ENCODE measurements at regions of chr20 and their contacts with region 1.

Region 1: GRCh38 chr20:41717483-41717882 is 99.3 kb upstream of the CHD6 start:
- DNase-seq: no peak
- H3K4me3 ChIP-seq: no peak overlapping the region
- H3K27me3 ChIP-seq: no peaks in the 10 kb centered on the region
- CTCF ChIP-seq: no peak

Region 2: DNA sequence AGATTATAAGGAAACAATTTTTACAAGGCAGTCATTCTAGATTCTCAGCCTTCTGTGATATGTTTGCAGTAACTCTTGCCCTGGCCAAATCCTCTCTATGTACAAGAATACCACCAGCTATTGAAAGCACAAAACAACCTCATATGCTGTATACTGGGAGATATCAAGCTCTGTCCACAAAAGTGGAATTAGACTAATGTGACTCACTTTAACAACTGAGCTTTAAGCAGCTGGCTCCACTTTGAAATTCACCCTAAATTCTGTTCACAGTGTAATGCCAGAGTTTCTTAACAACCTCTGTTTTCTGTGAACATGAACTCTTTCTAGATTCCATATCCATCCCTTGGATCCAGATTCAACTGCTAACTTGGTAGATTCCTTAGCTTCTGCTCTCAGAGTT is 146.9 kb before region 1 on chr20:
- CTCF ChIA-PET with region 1: no interaction called
- POLR2A ChIA-PET with region 1: no interaction called
- DNase-seq: no peak
- H3K4me3 ChIP-seq: no peak overlapping the region
- H3K27me3 ChIP-seq: no peaks in the 10 kb centered on the region
- CTCF ChIP-seq: no peak

Region 3: DNA sequence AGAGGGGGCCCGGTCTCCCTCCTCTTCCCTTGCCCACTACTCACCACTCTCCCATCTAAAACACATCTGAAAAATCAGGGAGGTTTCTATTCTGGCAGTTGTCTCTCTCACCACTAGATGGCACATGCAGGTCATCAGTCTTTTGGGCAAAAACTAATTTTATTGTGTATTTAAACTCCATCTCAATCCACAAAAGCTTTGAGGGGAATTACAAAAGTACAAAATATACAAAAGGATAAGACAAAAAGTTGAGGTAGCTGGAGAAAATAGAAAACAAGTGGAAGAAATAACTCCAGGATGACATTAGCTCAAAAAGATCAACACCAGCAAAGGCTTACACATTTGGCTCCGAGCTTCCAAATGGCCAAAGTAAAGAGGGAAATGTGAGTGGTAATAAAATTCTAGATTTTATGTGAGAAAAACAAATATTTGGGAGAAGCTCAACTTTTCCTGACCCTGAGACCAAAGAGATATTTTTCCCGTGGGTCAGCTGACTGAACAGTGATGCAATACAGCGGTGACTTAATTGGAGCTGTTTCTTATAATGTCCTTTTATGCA is 19.5 kb before region 1 on chr20:
- CTCF ChIA-PET with region 1: interaction called, 13 read pairs
- POLR2A ChIA-PET with region 1: no interaction called
- DNase-seq: no peak
- H3K4me3 ChIP-seq: no peak overlapping the region
- H3K27me3 ChIP-seq: peaks cover 4% of the 10 kb centered on the region
- CTCF ChIP-seq: peak; percentile 89

Region 4: GRCh38 chr20:41738604-41739206 is 21.2 kb after region 1 on chr20:
- CTCF ChIA-PET with region 1: interaction called, 10 read pairs
- POLR2A ChIA-PET with region 1: no interaction called
- DNase-seq: no peak
- H3K4me3 ChIP-seq: no peak overlapping the region
- H3K27me3 ChIP-seq: peaks cover 2% of the 10 kb centered on the region; the same call in 1 of the 2 replicates
- CTCF ChIP-seq: peak; percentile 93

Measured in BJ (cell line).